ENCODE measurements at regions of chr3 and their contacts with region 1.

Region 1: DNA sequence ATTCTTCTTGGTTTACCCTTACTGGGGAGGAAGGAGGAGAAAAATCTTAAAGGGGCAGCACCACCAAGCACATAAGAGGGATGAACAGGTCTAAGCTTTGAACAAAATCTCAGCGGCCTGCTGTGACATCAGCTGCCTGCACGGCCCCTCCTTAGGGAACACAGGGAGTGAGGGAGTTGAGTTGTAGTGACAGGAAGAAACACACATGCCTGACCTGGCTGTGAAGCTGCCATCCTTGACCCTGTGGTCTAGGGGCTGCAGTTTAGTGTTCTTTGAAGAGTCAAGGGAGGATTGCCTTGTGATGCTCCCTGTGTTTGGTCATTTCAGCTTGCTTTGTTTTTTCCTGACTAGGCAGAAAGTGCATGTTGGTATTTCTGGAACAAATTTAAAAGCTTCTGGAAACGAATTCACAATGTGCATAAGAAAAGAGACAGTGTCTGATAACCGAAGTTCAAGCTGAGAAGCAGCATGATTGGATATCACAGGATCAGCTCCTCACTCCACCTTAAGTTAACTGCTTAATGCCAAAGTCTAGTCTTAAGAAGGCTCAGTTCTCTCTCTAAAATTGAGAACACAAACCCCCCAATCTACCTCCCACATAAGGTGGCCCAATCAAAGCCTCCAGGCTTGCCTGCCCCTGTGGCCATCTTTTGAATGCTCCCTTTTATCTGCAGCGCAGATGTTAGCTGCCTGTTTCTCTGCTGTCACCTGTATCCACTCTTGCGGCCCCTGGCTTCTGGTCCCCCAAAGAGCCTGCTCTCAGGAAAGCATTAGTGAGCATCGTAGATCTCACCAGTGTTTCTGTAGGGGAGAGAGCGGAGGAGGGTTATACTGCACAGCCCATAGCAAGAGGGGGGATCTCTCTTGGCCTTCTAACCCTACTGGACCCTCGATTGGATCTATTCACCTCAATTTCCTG is 82.2 kb downstream of the SCN11A start:
- DNase-seq: no peak
- ATAC-seq: no peak
- H3K4me3 ChIP-seq: no peak overlapping the region
- H3K27ac ChIP-seq: no peak overlapping the region
- H3K4me1 ChIP-seq: peaks cover 0 to 8% (median 0%) of the 10 kb centered on the region in 9 donors
- H3K27me3 ChIP-seq: peaks cover 0 to 5% (median 0%) of the 10 kb centered on the region in 7 donors
- CTCF ChIP-seq: no peak

Region 2: DNA sequence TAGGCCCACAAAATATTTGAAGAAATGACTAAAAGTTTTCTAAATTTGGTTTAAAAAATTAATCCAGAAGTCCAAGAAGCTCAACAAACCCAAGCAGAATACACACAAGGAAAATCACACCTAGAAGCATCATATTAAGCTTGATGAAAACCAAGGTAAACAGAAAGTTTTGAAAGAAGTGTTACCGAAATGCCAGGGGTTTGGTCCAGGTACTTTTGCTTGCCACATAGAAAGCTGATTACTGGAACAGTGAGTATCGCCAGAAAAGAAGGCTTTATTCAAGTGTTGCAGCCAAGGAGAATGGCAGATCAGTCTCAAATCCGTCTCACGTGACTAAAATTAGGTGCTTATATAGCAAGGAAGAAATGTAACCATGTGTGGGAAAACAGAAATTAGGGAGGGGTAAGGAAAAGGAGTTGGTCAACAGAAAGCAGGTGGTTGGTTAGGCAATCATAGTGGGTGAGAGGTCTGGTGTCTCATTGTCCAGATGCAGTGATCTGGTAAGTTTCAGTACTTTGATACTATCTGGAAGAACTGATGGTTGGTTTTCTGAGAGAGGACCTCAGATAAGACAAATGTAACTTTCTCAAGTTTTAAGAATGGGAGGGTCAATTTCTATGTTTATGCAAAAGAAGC is 743.0 kb after region 1 on chr3:
- intact Hi-C with region 1: loop called in 1 of 10 experiments (anchors 5 kb)
- DNase-seq: no peak
- ATAC-seq: no peak
- H3K4me3 ChIP-seq: no peak overlapping the region
- H3K27ac ChIP-seq: no peak overlapping the region
- H3K4me1 ChIP-seq: no peaks in the 10 kb centered on the region
- H3K27me3 ChIP-seq: no peaks in the 10 kb centered on the region
- CTCF ChIP-seq: no peak